Heart left ventricle (tissue), 16 donors: ENCODE measurements at regions of chr2 and their contacts with region 1.

Region 1: GRCh38 chr2:71933467-71934319 is 214.0 kb downstream of the CYP26B1 start:
- DNase-seq: peak in 1 of 5 donors; percentile 3
- ATAC-seq: peak in 1 of 4 donors; percentile 8
- H3K4me3 ChIP-seq: no peak overlapping the region
- H3K27ac ChIP-seq: no peak overlapping the region
- H3K4me1 ChIP-seq: peaks cover 0 to 12% (median 0%) of the 10 kb centered on the region in 12 donors
- H3K27me3 ChIP-seq: no peaks in the 10 kb centered on the region
- CTCF ChIP-seq: peak in 6 of 12 donors; percentile 7 to 34 (median 16)
- POLR2A ChIP-seq: no peak

Region 2: GRCh38 chr2:71889991-71890684 is 43.6 kb before region 1 on chr2:
- intact Hi-C with region 1: no loop called
- DNase-seq: peak in 2 of 5 donors; percentile 46 to 61
- ATAC-seq: peak in 3 of 4 donors; percentile 13 to 92 (median 86)
- H3K4me3 ChIP-seq: no peak overlapping the region
- H3K27ac ChIP-seq: no peak overlapping the region
- H3K4me1 ChIP-seq: peaks cover 0 to 5% (median 0%) of the 10 kb centered on the region in 12 donors
- H3K27me3 ChIP-seq: no peaks in the 10 kb centered on the region
- CTCF ChIP-seq: no peak
- POLR2A ChIP-seq: no peak

Region 3: GRCh38 chr2:72137498-72138010 is 203.9 kb after region 1 on chr2:
- intact Hi-C with region 1: loop called in 1 of 10 experiments (anchors 5 kb)
- DNase-seq: peak; percentile 47 to 85 (median 64)
- ATAC-seq: peak; percentile 32 to 82 (median 70)
- H3K4me3 ChIP-seq: peak overlapping the region in 1 of 12 donors; percentile 16
- H3K27ac ChIP-seq: peak overlapping the region in 1 of 12 donors; percentile 14
- H3K4me1 ChIP-seq: peaks cover 7 to 27% (median 16%) of the 10 kb centered on the region in 12 donors
- H3K27me3 ChIP-seq: peaks cover 0 to 4% (median 0%) of the 10 kb centered on the region in 9 donors
- CTCF ChIP-seq: peak; percentile 83 to 94 (median 90)
- POLR2A ChIP-seq: no peak